Esophagus muscularis mucosa (tissue), 4 donors: ENCODE measurements at regions of chr20 and their contacts with region 1.

Region 1: DNA sequence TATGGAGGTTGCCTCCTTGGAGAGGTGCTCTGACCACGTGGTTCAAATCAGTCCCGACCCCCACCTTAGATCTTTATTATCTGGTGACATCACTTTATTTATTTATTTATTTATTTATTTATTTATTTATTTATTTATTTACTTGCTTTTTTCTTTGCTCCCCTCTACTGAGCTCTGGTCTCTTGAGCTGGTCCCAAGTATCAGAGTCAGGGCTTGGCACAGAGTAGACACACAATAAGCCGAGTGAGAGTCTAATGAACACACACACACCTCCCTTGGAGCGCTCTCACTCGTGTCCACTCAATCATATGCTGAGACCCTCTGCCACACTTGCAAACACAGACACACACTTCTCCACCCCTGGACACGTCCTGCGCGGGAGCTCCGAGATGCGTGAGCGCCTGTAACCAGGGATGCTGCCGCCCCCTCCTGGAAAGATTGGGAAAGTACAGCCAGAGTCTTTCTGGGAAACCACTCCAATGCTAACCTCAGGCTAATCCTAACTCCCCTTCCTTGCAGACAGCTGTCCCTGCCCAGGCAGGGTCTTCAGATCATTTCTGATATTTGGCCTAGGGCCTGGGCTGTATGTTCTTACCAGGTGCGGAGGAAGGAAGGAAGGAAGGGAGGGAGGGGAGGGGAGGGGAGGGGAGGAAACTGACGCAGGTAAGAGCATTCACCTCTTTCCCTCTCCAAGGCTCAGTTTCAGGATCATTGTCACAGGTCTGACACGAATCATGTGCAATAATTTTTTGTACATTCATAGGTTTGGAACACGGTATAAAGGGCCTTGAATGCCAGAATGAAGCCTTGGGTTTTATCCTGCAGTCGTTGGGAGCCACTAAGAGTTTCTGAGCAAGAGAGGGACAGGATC is 70.9 kb downstream of the STK35 start:
- DNase-seq: peak; percentile 95
- H3K4me3 ChIP-seq: no peak overlapping the region
- H3K27ac ChIP-seq: no peak overlapping the region
- H3K4me1 ChIP-seq: peaks cover 2 to 10% (median 5%) of the 10 kb centered on the region in 4 donors
- H3K27me3 ChIP-seq: peaks cover 0 to 4% (median 0%) of the 10 kb centered on the region in 4 donors
- CTCF ChIP-seq: peak; percentile 89 to 92 (median 89)
- EP300 ChIP-seq: no peak
- POLR2A ChIP-seq: no peak

Region 2: GRCh38 chr20:1764136-1765033 is 408.2 kb before region 1 on chr20:
- intact Hi-C with region 1: loop called (anchors 10 kb)
- DNase-seq: no peak
- H3K4me3 ChIP-seq: no peak overlapping the region
- H3K27ac ChIP-seq: no peak overlapping the region
- H3K4me1 ChIP-seq: peaks cover 0 to 7% (median 2%) of the 10 kb centered on the region in 4 donors
- H3K27me3 ChIP-seq: no peaks in the 10 kb centered on the region
- CTCF ChIP-seq: peak; percentile 60 to 76 (median 72)
- EP300 ChIP-seq: no peak
- POLR2A ChIP-seq: no peak

Region 3: GRCh38 chr20:2086177-2086979 is 86.2 kb before region 1 on chr20:
- intact Hi-C with region 1: loop called (anchors 5 kb)
- DNase-seq: no peak
- H3K4me3 ChIP-seq: no peak overlapping the region
- H3K27ac ChIP-seq: no peak overlapping the region
- H3K4me1 ChIP-seq: peaks cover 0 to 8% (median 0%) of the 10 kb centered on the region in 4 donors
- H3K27me3 ChIP-seq: peaks cover 0 to 4% (median 2%) of the 10 kb centered on the region in 4 donors
- CTCF ChIP-seq: peak in 2 of 3 experiments; percentile 20 to 35
- EP300 ChIP-seq: no peak
- POLR2A ChIP-seq: no peak

Region 4: DNA sequence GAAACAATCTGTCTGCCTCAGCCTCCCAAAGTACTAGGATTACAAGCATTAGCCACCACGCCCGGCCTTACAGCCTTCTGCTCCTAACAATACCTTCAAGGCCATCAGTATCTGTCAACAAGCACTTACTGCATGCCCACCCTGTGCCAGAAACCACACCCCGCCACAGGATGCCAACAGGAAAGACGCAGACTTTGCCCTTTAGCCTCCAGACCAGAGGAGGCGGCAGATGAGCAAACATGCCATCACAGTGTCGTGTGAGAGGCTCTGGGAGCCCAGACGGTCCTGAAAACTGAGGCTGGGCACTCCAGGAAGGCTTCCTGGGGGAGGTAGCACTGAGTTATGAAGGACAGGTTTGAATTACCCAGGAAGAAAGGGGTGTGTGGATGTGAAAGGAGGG is 88.6 kb after region 1 on chr20:
- intact Hi-C with region 1: no loop called
- DNase-seq: no peak
- H3K4me3 ChIP-seq: no peak overlapping the region
- H3K27ac ChIP-seq: no peak overlapping the region
- H3K4me1 ChIP-seq: no peaks in the 10 kb centered on the region
- H3K27me3 ChIP-seq: peaks cover 0 to 29% (median 0%) of the 10 kb centered on the region in 4 donors
- CTCF ChIP-seq: no peak
- EP300 ChIP-seq: no peak
- POLR2A ChIP-seq: no peak